Activated T-helper 1 cell treated with anti-CD3 and anti-CD28 coated beads, Interleukin-12 subunit alpha, Interleukin-12 subunit beta, Interleukin-2, Interleukin-4 antibody, amounts not matched to agents 30 ng/mL and 10 ng/mL and 1 ng/mL, durations not matched to agents 14 hours and 24 hours and 36 hours (primary cell): ENCODE measurements at regions of chr1 and their contacts with region 1.

Region 1: DNA sequence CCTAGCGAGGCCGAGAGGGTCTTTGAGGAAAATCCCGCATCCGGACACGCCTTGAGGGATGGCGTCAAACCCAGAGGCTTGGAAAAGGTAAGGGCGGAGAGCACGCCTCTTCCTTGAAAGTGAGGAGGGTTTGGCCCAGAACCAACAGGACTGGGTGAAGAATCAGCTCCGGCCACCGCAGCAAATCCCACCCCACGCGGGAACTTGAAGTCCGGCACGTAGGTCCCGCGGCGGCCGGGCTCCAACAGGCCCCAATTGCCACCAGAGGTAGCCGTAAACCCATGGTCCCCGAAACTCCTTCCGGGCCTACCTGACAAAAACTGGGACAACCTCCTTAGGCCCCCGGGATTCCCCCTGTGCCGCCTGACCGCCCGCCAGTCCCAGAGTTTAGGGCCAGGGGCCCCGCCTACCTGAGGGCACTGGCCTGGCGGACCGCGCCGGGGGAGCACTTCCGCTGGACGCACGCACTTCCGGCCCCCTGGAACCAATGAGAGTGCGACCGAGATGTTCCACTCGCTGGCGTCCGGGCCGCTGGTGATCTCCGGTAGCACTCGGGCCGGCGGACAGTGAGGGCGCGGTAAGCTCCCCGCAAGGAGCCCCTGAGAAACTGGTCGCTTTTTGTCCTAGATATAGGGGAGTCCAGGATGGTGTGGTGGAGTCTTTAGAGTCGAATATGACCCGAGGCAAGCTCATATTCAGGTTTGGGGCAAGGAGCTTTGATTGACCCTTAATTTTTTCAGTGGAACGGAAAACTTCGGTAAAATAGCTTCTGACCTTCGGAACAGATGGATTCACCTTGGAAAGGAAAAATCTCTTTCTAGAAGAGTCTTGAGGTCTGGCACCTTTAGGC is at the starts of genes LZIC and NMNAT1:
- DNase-seq: peak; percentile 88
- H3K4me3 Mint-ChIP-seq: peak within 1 kb of the TSS; percentile 100
- H3K27ac Mint-ChIP-seq: peak within 1 kb of the TSS; percentile 97
- H3K4me1 Mint-ChIP-seq: peaks cover 12% of the 10 kb centered on the region
- H3K27me3 Mint-ChIP-seq: no peaks in the 10 kb centered on the region
- total RNA-seq, gene LZIC: 29.9 and 35.9 TPM in 2 replicates
- total RNA-seq, gene NMNAT1: 5.0 and 5.8 TPM in 2 replicates

Region 2: GRCh38 chr1:9728451-9729295 is 214.5 kb before region 1 on chr1:
- intact Hi-C with region 1: loop called (anchors 2 kb)
- DNase-seq: peak; percentile 54
- H3K4me3 Mint-ChIP-seq: peak overlapping the region; percentile 72
- H3K27ac Mint-ChIP-seq: peak overlapping the region; percentile 83
- H3K4me1 Mint-ChIP-seq: peaks cover 56% of the 10 kb centered on the region
- H3K27me3 Mint-ChIP-seq: no peaks in the 10 kb centered on the region

Region 3: DNA sequence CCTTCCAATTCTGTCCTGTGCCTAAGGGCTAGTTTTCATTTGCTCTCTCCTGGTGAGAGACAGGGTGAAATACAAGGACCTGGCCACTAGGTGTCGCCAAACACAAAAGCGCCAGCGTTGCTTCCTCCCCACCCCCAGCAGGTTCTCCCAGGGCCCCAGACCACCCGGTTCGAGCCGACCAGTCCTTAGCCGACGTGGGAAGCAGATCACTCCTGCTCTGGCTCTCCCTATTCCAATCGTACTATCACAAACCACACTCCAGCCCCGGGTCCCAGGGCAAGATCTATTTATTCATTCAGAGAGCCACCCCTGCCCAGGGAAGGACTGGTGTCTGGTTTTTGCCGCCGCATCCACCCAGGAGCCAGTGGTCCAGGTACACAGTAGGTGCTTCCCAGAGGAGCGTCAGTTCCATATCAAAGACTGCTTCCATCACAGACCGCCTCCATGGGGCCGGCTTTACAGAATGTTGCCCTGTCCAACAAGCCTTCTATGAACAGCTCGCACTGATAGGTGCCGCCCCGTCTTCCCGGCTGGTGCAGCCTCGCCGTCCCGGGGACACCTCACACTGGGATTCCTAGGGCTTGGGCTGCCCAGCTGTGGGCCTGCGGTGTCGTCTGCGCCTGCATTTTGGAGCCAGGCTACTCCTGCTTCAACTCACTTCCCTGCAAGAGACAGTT is 68.1 kb before region 1 on chr1:
- intact Hi-C with region 1: loop called (anchors 1 kb)
- DNase-seq: peak; percentile 60
- H3K4me3 Mint-ChIP-seq: no peak overlapping the region
- H3K27ac Mint-ChIP-seq: no peak overlapping the region
- H3K4me1 Mint-ChIP-seq: peaks cover 7% of the 10 kb centered on the region
- H3K27me3 Mint-ChIP-seq: no peaks in the 10 kb centered on the region

Region 4: GRCh38 chr1:10398734-10399623 is 455.8 kb after region 1 on chr1 and contains the start of gene PGD:
- intact Hi-C with region 1: loop called (anchors 1 kb)
- DNase-seq: peak; percentile 98
- H3K4me3 Mint-ChIP-seq: peak within 1 kb of the TSS; percentile 92
- H3K27ac Mint-ChIP-seq: peak within 1 kb of the TSS; percentile 77
- H3K4me1 Mint-ChIP-seq: peaks cover 25% of the 10 kb centered on the region
- H3K27me3 Mint-ChIP-seq: no peaks in the 10 kb centered on the region
- total RNA-seq, gene PGD: 131 and 142 TPM in 2 replicates

Region 5: DNA sequence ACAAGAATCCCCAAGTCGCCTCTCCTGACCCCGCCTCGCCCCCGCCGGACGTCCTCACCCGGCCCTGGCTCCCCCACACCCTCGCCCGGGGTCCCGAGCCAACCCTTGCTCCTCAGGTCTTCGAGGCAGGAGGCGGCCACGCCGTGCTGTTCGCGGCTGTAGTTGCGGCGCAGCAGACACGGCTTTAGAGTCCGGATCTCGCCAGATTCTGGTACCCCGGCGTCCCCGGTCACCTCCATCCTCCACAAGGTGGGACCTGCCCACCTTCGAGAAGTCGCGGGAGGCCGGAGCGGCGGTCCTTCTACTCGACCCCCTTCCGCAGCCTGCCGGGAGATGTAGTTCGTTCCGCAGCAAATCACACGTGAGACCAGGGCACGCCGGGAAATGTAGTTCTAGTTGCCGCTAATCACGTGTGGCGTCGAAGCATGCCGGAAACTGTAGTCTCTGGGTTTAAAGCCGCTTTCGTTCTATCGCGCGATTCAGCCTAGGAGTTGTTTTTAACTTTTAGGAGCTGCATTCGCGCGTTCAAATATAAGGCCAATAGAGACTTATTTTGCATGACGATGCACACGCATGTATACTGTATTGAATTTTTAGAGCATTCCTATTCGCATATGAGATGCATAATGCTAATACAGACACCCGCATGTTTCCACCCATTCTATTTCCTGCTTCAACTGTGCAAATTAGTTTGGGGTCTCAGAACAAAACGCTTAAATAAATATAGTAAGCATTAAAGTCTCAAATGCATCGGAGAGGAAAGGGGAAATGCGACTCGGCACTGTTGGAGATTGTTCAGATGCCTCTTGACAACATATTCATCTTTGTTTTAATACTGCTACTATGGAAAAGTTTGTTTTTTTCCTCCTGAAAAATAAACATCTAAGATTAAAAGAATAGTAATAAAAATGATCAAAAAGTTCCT is 529.3 kb after region 1 on chr1 and contains the start of gene DFFA:
- intact Hi-C with region 1: loop called (anchors 2 kb)
- DNase-seq: peak; percentile 90
- H3K4me3 Mint-ChIP-seq: peak within 1 kb of the TSS; percentile 89
- H3K27ac Mint-ChIP-seq: peak within 1 kb of the TSS; percentile 85
- H3K4me1 Mint-ChIP-seq: peaks cover 45% of the 10 kb centered on the region
- H3K27me3 Mint-ChIP-seq: no peaks in the 10 kb centered on the region
- total RNA-seq, gene DFFA: 54.7 and 60.1 TPM in 2 replicates